ENCODE measurements at regions of chr20 and their contacts with region 1.

Region 1: GRCh38 chr20:24992487-24993205 is at the start of gene APMAP:
- DNase-seq: peak; percentile 97
- H3K4me3 ChIP-seq: peak within 1 kb of the TSS; percentile 86
- H3K27ac ChIP-seq: peak within 1 kb of the TSS; percentile 84
- H3K4me1 ChIP-seq: peaks cover 16% of the 10 kb centered on the region
- H3K27me3 ChIP-seq: no peaks in the 10 kb centered on the region
- total RNA-seq, gene APMAP: 109 and 129 TPM in 2 replicates

Region 2: DNA sequence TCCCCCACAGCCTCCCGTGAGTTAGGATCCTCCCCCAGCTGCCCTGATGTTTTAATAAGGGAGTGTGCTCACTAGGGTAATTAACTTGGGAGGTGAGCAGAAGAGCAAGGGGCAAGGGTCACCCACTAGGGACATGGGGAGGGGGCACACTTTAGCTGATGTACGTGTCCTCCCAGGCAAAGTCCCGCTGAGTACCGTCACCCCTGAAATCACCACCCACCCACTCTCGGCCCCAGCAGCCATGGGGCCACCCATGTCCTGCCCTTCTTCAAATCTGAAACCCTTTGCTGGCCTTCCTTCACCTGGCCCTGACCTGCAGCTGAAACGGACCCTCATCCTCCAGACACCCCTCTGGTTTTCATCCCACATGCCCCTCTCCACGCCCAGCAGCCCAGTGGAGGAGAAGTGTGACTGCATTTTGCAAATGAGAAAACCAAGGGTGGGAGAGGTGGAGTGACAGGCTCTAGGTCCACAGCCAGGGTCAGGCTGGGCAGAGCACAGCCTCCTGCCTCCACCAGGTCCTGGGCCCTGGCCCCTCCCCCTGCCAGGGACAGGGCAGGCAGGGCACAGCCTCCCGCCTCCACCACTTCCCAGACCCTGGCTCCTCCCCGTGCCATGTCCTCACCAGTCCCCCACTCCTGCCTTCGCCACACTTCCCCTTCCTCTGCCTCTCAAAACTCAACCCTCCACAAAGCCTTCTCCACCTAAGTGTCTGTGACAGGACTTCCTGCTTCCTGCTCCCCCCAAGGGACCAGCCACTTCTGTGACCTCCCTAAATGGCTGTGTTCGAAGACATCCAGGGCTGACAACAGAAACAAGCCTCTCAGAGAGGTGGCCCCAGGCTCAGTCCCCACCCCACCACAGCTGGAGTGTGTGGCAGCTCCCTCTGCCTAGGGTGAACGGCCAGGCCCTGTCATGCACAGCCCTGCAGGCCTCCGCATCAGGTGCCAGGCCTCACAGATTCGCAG is 50.2 kb after region 1 on chr20:
- in situ Hi-C with region 1: no loop called
- DNase-seq: no peak
- H3K4me3 ChIP-seq: no peak overlapping the region
- H3K27ac ChIP-seq: no peak overlapping the region
- H3K4me1 ChIP-seq: peaks cover 20% of the 10 kb centered on the region
- H3K27me3 ChIP-seq: no peaks in the 10 kb centered on the region

Region 3: GRCh38 chr20:25065625-25066338 is 73.1 kb after region 1 on chr20:
- in situ Hi-C with region 1: loop called (anchors 5 kb)
- DNase-seq: peak; percentile 77
- H3K4me3 ChIP-seq: no peak overlapping the region
- H3K27ac ChIP-seq: no peak overlapping the region
- H3K4me1 ChIP-seq: no peaks in the 10 kb centered on the region
- H3K27me3 ChIP-seq: peaks cover 51% of the 10 kb centered on the region

Region 4: DNA sequence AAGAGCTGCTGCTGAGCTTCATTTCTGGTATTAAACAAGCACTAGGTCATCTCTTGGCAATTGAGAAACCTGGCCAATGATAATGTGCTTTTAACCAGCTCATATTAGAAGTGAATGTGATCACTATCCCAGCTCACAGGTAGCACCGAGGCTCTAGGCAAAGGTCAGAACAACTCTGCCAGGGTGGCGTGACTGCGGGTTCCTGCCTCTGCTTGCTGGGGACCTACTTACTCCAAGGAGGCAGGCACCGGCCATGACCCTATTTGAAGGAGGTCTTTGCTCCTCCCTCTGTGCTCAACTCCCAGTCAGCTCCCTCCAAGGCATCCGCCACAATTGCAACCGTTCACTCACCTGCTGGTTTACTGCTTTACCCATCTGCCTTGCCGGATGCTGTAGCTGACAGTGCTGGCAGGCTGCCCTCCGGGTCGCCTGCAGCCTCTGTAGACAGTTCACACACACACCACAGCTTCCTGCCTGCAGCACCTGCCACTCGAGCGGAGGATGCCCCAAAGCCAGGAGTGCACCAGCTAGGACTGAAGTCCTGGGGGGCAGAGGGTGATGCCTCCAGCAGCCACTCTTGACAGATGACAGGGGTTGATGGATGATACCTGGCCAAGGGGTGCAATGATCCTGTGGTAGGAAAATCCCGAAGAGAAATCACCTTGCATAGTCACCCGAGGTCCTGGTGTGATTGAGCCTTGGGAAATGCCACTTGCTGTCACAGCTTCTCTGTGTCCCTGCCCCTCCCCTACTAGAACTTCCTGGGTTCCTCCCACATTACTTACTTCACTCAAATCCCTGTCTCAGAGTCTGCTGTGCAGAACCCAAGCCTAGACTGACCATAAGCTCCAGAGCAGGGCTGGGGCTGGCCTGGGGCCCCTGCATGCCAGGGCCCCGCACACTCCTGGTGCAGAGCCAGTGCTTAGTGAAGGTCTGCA is 98.1 kb after region 1 on chr20:
- in situ Hi-C with region 1: no loop called
- DNase-seq: no peak
- H3K4me3 ChIP-seq: no peak overlapping the region
- H3K27ac ChIP-seq: no peak overlapping the region
- H3K4me1 ChIP-seq: no peaks in the 10 kb centered on the region
- H3K27me3 ChIP-seq: peaks cover 49% of the 10 kb centered on the region

Region 5: DNA sequence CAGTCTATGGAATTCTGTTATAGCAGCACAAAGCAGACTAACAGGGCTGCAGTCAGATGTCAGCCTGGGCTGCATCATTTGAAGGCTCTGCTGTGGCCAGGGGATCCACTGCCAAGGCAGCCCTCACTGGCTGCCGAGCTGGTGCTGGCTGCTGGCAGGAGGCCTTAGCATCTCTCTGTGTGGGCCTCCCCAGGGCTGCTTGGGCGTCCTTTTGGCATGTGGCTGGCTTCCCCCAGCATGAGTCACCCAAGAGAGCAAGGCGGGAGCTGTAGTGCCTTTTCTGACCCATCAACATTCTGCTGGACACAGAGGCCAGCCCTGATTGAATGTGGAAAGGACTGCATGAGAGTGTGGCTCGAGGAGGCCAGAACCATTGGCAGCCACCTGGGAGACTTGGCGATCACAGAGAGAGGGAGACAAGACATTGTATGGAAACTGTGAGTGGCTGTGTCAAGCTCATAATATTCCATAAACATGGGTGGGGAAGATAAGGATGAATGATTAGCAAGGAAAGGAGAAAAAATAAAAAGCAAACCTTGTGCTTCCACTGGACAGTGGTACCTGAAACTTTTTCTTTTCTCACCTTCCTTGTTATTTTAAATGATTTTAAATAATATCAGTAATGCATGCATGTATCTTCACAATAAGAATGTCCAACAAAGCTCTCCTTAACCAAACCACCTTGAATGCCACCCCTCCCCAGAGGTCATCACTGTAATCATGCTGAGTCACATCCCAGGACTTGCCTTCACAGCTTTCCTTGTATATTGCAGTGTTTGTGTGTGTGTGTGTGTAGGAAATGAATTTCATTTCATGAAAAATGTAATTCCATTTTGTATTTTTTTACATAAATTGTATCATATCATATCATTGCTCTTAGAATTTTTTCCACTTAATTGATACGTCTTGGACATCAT is 144.3 kb after region 1 on chr20:
- in situ Hi-C with region 1: no loop called
- DNase-seq: peak; percentile 94
- H3K4me3 ChIP-seq: no peak overlapping the region
- H3K27ac ChIP-seq: no peak overlapping the region; the same call in 1 of the 2 replicates
- H3K4me1 ChIP-seq: peaks cover 9% of the 10 kb centered on the region
- H3K27me3 ChIP-seq: peaks cover 31% of the 10 kb centered on the region; the same call in 1 of the 2 replicates

Region 6: DNA sequence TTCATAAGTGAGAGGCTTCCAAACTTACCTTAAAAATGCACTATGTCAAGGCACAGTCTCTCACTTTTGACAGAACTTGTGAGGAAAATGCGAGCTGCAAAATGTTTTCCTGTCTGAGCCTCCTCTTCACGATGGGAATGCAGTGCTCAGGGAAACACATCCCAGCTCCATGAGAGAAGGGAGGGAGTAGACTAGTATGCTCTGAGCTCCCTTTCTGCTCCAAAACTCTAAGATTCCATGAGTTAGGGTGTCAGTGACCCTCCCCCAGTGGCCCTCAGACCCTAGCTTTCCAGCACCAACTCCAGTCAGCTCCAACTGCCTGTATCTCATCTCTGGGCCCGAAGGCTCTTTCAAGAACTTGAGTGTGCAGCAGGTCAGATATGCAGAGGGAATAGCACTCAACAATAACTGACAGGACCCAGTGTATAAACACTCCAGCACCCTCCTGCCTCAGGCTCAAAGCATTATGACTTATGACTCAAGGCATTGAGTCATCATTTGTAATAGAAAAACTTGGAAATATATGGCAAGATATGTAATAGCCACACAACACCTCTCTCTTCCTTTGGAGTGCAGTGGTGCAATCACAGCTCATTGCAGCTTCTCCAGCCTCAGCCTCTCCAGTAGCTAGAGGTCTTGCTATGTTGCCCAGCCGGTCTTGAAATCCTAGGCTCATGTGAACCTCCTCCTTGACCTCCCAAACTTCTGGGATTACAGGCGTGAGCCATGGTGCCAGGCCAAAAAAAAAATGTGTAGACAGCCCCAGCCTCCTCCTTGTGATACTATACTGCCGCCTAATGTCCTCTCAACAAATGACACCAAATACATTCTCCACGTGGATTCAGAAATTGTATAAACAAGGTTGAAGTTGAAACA is 186.2 kb after region 1 on chr20:
- in situ Hi-C with region 1: loop called (anchors 10 kb)
- DNase-seq: peak; percentile 92
- H3K4me3 ChIP-seq: no peak overlapping the region
- H3K27ac ChIP-seq: peak overlapping the region; percentile 32
- H3K4me1 ChIP-seq: peaks cover 17% of the 10 kb centered on the region
- H3K27me3 ChIP-seq: peaks cover 6% of the 10 kb centered on the region

Region 7: GRCh38 chr20:25294459-25295385 is 302.1 kb after region 1 on chr20:
- in situ Hi-C with region 1: loop called (anchors 10 kb)
- DNase-seq: peak; percentile 63
- H3K4me3 ChIP-seq: no peak overlapping the region
- H3K27ac ChIP-seq: no peak overlapping the region
- H3K4me1 ChIP-seq: no peaks in the 10 kb centered on the region
- H3K27me3 ChIP-seq: no peaks in the 10 kb centered on the region

Region 8: DNA sequence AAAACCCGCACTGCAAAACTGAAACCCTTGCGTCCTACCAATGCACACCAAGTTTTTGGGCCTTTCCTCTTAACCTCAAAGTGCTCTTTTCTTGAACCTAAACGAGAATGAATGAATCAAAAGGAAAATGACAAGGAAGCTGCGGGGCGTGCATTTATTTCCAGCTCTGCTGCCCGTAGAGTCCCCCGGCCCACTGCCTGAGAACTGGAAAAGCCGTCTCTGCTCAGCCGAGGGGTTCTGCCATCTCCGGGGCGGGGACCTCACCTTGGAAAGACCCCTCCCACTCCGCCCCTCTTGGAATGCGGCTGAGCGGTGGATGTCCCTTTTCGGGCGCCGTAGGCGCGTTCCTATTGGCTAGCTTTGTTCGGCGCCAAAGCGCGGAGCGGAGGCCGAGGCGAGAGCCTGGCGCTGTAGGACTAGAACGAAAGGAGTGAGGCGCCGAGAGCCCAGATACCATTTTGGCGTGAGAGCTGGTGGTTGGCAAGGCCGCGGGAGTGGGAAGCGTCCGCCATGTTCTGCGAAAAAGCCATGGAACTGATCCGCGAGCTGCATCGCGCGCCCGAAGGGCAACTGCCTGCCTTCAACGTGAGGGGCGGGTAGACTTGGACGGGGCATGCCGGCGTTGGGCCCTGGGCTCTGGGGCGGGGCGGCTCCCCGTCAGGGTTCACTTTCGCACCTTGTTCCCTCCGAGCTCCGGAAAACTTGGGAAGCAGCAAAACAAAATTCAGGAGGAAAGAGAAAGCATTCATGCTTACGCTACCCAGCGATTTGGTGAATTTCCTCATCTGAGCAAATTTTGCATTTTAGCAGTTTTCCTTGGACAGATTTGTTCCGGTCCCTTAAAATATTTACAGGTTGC is 414.9 kb after region 1 on chr20 and contains the start of gene GINS1:
- in situ Hi-C with region 1: loop called (anchors 10 kb)
- DNase-seq: peak; percentile 86
- H3K4me3 ChIP-seq: peak within 1 kb of the TSS; percentile 89
- H3K27ac ChIP-seq: peak within 1 kb of the TSS; percentile 52
- H3K4me1 ChIP-seq: peaks cover 10% of the 10 kb centered on the region; the same call in 1 of the 2 replicates
- H3K27me3 ChIP-seq: no peaks in the 10 kb centered on the region
- total RNA-seq, gene GINS1: 2.9 and 7.5 TPM in 2 replicates

Region 9: GRCh38 chr20:25508078-25508770 is 515.6 kb after region 1 on chr20:
- in situ Hi-C with region 1: loop called (anchors 25 kb)
- DNase-seq: peak; percentile 82
- H3K4me3 ChIP-seq: no peak overlapping the region
- H3K27ac ChIP-seq: peak overlapping the region; percentile 22; the same call in 1 of the 2 replicates
- H3K4me1 ChIP-seq: peaks cover 7% of the 10 kb centered on the region; the same call in 1 of the 2 replicates
- H3K27me3 ChIP-seq: no peaks in the 10 kb centered on the region

Region 10: GRCh38 chr20:25865380-25866118 is 872.9 kb after region 1 on chr20:
- in situ Hi-C with region 1: loop called (anchors 25 kb)
- DNase-seq: peak; percentile 85
- H3K4me3 ChIP-seq: peak overlapping the region; percentile 80
- H3K27ac ChIP-seq: no peak overlapping the region
- H3K4me1 ChIP-seq: no peaks in the 10 kb centered on the region
- H3K27me3 ChIP-seq: peaks cover 3% of the 10 kb centered on the region; the same call in 1 of the 2 replicates